Activated CD4-positive, alpha-beta T cell treated with anti-CD3 and anti-CD28 coated beads, Interleukin-2, amount 10 ng/mL, durations not matched to agents 24 days and 14 days (primary cell): ENCODE measurements at regions of chr4 and their contacts with region 1.

Region 1: DNA sequence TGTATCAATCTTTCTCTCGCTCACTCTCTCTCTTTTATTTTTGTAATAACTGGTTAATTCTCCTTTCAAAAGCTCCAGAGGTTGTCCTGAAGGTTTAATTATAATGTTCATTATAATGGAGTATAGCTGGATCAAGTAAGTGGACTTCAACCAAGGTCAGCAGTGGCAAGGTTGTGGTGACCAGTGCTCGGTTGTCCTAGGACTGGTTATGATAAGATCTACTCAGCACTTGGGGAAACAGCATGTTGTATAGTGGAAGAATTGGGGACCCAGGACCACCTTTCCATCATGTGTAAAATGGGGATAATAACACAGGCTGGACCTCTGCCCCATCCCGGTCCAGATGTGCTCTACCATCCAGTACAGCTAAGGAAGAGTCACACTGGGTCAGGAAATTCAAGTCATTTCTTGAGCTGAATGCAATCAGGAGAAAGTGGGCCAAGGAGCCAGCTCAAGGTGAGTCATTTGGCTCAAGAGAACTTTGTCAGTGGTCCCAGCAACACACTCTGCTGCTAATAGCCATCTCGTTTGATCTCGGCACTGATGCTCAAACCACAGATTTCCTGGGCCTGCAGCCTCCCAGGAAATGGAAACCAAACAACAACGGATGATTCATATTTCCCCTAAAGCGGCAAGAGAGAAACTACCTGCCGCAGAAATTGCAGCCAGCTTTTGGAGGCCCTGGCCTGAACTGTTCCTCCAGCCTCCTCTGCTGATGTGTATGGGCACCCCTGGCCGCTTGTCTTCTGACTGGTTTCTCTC is 123.6 kb upstream of the RBPJ start:
- DNase-seq: peak; percentile 93
- H3K4me3 Mint-ChIP-seq: peak overlapping the region; percentile 74
- H3K27ac Mint-ChIP-seq: peak overlapping the region; percentile 96
- H3K4me1 Mint-ChIP-seq: peaks cover 72% of the 10 kb centered on the region
- H3K27me3 Mint-ChIP-seq: no peaks in the 10 kb centered on the region

Region 2: DNA sequence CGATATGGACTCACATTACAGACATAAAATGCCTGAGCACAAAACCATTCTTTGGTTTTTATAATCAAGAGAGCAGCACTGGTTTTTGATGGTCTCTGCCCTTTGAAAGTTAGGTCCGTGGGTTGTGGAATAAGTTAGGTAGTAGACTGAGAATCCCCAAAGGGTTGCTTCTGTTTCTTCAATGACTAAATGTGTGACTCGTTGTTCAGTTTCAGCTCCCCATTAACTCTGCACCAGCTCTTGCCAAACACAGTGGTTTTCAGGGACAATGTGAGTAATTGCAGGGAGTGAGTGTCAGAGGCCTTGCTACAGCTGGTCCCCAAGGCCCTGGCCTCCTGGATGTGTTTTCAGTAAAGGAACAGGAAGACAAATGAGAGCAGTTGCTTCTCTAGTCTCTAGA is 258.4 kb before region 1 on chr4:
- intact Hi-C with region 1: loop called (anchors 5 kb)
- DNase-seq: peak; percentile 65
- H3K4me3 Mint-ChIP-seq: peak overlapping the region; percentile 20
- H3K27ac Mint-ChIP-seq: peak overlapping the region; percentile 89
- H3K4me1 Mint-ChIP-seq: peaks cover 26% of the 10 kb centered on the region
- H3K27me3 Mint-ChIP-seq: peaks cover 5% of the 10 kb centered on the region

Region 3: DNA sequence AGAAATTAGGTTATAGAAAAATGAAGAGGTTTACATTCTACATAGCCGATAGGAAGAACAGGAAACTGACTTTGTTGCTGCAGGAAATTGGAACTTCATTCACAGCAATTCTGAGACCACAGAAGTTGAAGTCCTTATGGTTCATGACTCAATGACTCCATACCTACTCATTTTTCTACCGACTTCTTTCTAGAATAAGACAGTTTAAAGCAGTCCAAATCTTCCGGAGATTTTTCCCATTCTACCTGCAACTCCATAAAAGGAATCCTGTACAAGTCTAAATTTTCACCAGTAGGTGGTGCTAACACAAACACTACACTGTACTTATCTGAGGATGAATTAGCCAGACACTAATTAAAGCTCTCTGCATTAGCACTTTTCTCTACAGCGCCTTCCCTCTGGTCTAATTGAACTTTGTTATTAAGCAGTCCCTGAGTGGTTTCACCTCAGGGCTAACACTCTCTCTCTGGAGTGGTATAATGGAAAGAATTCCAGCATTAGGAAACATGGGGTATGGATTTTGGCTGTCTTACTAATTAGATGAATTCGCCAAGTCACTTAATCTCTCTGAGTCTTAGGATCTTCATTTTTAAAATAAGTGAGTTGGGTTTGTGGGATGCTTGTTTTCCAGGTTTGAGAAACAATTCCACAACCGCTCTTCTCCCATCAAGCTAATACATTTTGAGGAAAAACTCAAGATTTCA is 115.3 kb before region 1 on chr4:
- intact Hi-C with region 1: loop called (anchors 1 kb)
- DNase-seq: peak; percentile 64
- H3K4me3 Mint-ChIP-seq: peak overlapping the region; percentile 15
- H3K27ac Mint-ChIP-seq: peak overlapping the region; percentile 89
- H3K4me1 Mint-ChIP-seq: peaks cover 68% of the 10 kb centered on the region
- H3K27me3 Mint-ChIP-seq: no peaks in the 10 kb centered on the region

Region 4: DNA sequence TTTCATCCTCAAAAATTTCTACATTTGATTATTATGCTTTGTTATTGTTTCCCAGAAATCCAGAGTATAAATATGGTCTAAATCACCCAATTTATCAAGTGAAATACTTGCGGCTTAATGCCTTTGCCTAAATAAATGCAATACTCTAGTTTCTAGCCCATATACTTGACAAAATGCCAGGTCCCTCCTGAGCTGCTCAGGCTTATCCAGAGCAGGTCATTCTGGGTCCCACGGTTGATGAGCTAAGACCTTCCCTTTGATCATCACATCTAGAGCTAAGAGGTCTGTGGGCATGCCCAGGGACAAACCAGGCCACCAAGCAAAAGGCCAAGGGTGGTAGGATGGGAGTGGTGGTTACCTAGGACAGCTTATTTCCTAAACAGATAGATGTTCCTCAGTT is 103.1 kb before region 1 on chr4:
- intact Hi-C with region 1: no loop called
- DNase-seq: no peak
- H3K4me3 Mint-ChIP-seq: no peak overlapping the region
- H3K27ac Mint-ChIP-seq: peak overlapping the region; percentile 96
- H3K4me1 Mint-ChIP-seq: peaks cover 53% of the 10 kb centered on the region
- H3K27me3 Mint-ChIP-seq: no peaks in the 10 kb centered on the region

Region 5: DNA sequence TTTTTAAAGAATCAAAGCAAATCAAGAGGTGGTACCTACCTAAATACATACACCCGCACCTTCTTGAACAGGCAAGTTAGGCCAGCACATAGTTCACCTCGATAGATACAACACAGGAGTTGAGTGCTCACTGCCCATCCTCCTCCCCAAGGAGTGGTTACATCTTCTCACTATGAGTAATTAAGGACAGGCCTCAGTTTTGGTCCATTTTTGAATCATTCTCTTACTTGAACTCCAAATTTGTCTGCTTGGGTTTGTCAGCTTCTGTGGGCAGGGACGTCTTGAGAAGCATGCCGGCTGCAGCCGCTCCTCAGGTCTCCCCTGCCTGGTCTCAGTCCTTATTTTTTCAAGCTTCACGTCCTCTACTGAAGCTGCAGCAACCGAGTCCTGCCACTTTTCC is 67.0 kb before region 1 on chr4:
- intact Hi-C with region 1: loop called (anchors 2 kb)
- DNase-seq: peak; percentile 67
- H3K4me3 Mint-ChIP-seq: peak overlapping the region; percentile 51
- H3K27ac Mint-ChIP-seq: peak overlapping the region; percentile 76
- H3K4me1 Mint-ChIP-seq: peaks cover 59% of the 10 kb centered on the region
- H3K27me3 Mint-ChIP-seq: no peaks in the 10 kb centered on the region

Region 6: DNA sequence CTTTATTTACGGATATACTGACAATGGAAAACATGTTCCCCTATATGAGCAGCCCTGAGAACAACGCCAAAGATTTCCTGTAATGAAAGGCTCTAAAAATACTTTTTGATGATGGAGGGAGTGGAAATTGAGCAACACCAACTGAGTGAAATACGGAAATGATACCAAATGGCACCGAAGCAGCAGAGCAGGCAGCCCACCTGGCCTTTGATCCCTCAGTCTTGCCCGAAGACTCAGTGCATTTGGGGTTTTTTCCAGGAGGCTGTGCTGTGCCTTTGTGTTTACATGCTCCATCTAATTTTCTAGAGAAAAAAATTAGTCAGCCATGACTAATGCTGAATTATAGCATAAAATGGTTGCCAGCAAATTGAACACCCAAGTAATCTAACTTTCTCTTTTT is 46.3 kb before region 1 on chr4:
- intact Hi-C with region 1: loop called (anchors 1 kb)
- DNase-seq: no peak
- H3K4me3 Mint-ChIP-seq: no peak overlapping the region
- H3K27ac Mint-ChIP-seq: peak overlapping the region; percentile 92
- H3K4me1 Mint-ChIP-seq: peaks cover 43% of the 10 kb centered on the region
- H3K27me3 Mint-ChIP-seq: no peaks in the 10 kb centered on the region

Region 7: DNA sequence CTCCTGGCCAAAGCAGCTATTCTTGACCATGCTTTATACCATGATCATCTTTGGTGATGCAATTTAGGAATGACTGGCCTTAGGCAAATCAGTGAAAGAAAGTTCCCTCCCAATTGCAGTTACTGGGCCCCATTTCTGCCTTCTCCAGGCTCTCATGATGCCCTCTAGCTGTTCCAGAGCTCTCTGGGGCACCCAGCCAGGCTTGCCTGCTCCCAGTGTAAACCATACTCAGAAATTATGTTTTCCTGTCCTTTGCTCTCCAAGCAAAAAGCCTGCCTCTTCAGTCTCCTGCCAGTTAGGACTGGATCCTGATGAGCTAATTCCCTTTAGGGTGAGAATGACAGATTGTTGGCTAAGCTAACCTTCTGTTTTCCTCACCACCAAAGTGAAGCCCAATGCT is 38.3 kb after region 1 on chr4:
- intact Hi-C with region 1: loop called (anchors 5 kb)
- DNase-seq: no peak
- H3K4me3 Mint-ChIP-seq: no peak overlapping the region
- H3K27ac Mint-ChIP-seq: no peak overlapping the region
- H3K4me1 Mint-ChIP-seq: peaks cover 18% of the 10 kb centered on the region
- H3K27me3 Mint-ChIP-seq: no peaks in the 10 kb centered on the region